Activated CD8-positive, alpha-beta T cell treated with anti-CD3 and anti-CD28 coated beads, Interleukin-2, amount 10 ng/mL, durations not matched to agents 7 days and 5 days (primary cell): ENCODE measurements at regions of chr12 and their contacts with region 1.

Region 1: DNA sequence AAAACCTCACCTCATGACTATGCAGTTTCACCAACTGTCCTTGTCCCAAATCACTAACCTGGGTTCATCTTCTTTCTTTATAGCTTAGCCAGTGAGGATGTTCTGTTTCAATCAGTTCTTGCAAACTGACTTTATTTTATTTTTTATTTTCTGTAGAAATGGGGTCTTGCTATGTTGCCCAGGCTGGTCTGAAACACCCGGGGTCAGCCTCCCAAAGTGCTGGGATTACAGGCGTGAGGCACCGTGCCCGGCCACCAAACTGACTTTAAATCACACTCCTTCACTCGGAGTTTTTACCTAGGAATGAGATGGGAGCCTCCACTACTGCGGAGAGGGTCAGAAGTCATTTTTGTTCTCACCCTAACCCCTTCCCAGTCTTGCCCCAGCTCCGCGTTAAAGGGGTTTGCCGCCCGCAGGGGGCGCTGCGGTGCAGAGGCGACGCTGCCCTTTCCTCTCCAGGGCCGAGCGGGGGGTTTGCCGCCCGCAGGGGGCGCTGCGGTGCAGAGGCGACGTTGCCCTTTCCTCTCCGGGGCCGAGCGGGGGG is 7.0 kb upstream of the B4GALNT3 start:
- DNase-seq: peak; percentile 68
- ATAC-seq: no peak
- H3K4me3 Mint-ChIP-seq: no peak overlapping the region
- H3K27ac Mint-ChIP-seq: no peak overlapping the region
- H3K4me1 Mint-ChIP-seq: peaks cover 2% of the 10 kb centered on the region
- H3K27me3 Mint-ChIP-seq: peaks cover 43% of the 10 kb centered on the region

Region 2: GRCh38 chr12:278046-278445 is 174.7 kb before region 1 on chr12:
- CTCF ChIA-PET with region 1: no interaction called
- POLR2A ChIA-PET with region 1: no interaction called
- DNase-seq: no peak
- ATAC-seq: no peak
- H3K4me3 Mint-ChIP-seq: no peak overlapping the region
- H3K27ac Mint-ChIP-seq: no peak overlapping the region
- H3K4me1 Mint-ChIP-seq: no peaks in the 10 kb centered on the region
- H3K27me3 Mint-ChIP-seq: no peaks in the 10 kb centered on the region

Region 3: DNA sequence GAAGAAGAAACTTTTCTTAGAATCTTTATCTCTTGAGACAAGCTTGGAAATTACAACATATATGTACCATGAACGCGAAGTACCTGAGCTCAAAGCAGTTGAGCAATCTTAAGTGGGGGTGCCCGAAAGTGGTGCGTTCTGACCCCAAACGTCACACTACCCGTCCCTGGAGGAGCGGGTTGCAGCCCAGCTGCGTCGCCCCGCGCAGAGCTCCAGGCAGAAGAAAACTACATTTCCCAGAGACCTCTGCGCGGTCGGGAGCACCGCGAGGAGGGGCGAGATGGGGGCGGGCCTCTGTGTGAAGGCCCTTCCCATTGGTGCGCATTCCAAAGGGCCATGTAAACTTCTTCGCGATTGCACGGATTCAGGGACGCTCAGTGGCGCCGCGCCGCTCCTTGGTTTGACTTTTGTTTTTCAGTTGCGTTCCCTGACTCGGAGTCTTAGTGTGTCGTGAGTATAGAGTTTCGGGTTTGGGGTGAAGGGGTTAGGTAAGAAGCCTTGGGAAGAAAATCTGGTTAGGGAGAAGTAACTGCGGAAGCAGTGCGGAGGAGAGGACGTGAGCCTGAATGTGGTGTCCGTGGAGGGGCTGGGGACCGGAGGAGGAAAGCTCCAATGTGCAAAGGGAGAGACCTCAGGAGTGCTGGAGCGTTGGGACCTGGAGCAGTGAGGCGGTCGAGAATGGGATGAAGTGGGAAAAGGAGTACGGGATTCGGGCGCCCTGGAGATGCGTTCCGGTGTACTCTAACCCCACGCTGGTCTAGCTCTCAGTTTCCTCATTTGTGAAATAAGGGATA is 51.3 kb before region 1 on chr12 and contains the start of gene CCDC77:
- CTCF ChIA-PET with region 1: interaction called, 11 read pairs
- POLR2A ChIA-PET with region 1: no interaction called
- DNase-seq: peak; percentile 96
- ATAC-seq: peak; percentile 100
- H3K4me3 Mint-ChIP-seq: no peak within 1 kb of the TSS
- H3K27ac Mint-ChIP-seq: no peak within 1 kb of the TSS
- H3K4me1 Mint-ChIP-seq: no peaks in the 10 kb centered on the region
- H3K27me3 Mint-ChIP-seq: no peaks in the 10 kb centered on the region
- total RNA-seq, gene CCDC77: 16.8 to 18.9 TPM

Region 4: DNA sequence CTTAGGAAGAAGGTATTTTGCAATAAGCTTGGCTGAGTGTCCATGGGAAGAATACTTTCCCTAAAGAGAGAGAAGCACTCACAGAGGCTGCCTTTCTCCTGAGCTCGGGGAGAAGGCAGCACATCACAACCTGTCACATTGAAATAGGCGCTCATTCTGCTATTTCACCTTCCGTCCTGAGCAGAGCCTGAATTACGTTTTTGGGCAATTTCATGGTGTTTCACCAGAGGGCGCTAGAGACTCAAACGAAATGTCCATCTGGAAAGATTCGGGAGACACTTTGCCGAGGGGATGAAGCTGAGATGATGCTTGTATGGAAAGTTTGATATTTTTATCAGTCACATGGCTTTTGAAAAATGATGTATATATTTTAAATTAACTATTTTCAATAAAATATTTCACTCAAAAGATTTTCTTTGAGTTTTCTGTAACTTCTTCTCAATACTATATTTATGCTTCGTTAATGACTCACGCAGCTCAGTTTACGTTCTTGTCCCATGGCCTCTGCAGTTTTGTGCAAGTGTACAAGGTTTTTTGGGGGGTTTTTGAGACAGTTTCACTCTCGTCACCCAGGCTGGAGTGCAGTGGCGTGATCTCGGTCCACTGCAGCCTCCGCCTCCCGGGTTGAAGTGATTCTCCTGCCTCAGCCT is 10.4 kb before region 1 on chr12:
- CTCF ChIA-PET with region 1: interaction called, 22 read pairs
- POLR2A ChIA-PET with region 1: no interaction called
- DNase-seq: peak; percentile 55
- ATAC-seq: peak; percentile 36
- H3K4me3 Mint-ChIP-seq: no peak overlapping the region
- H3K27ac Mint-ChIP-seq: no peak overlapping the region
- H3K4me1 Mint-ChIP-seq: no peaks in the 10 kb centered on the region
- H3K27me3 Mint-ChIP-seq: no peaks in the 10 kb centered on the region

Region 5: GRCh38 chr12:538731-539539 is 86.2 kb after region 1 on chr12:
- CTCF ChIA-PET with region 1: interaction called, 58 read pairs
- POLR2A ChIA-PET with region 1: no interaction called
- DNase-seq: peak; percentile 71
- ATAC-seq: peak; percentile 97
- H3K4me3 Mint-ChIP-seq: peak overlapping the region; percentile 29
- H3K27ac Mint-ChIP-seq: peak overlapping the region; percentile 91
- H3K4me1 Mint-ChIP-seq: peaks cover 20% of the 10 kb centered on the region
- H3K27me3 Mint-ChIP-seq: no peaks in the 10 kb centered on the region

Region 6: GRCh38 chr12:546921-547845 is 94.4 kb after region 1 on chr12:
- CTCF ChIA-PET with region 1: interaction called, 81 read pairs
- POLR2A ChIA-PET with region 1: no interaction called
- DNase-seq: peak; percentile 76
- ATAC-seq: peak; percentile 82
- H3K4me3 Mint-ChIP-seq: no peak overlapping the region
- H3K27ac Mint-ChIP-seq: no peak overlapping the region
- H3K4me1 Mint-ChIP-seq: peaks cover 50% of the 10 kb centered on the region
- H3K27me3 Mint-ChIP-seq: peaks cover 22% of the 10 kb centered on the region

Region 7: DNA sequence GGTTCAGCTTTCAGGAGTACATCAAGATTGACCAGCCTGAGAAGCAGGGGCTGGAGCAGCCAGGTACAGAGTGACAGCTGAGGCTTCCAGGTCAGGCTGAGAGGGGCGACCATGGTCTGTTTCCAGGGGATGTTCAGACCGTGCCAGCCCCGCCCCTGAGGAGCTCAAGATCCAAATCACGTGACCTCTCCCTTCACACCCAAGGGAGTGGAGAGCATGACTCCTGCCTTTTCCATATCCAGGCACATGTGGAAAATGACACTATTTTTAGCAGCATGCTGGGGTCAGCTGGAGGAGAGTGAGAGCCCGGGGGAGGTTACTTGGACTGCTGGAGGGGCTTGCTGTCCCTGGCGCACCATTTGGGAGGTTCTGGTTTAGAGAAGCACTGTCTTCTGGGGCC is 99.7 kb after region 1 on chr12:
- CTCF ChIA-PET with region 1: interaction called, 81 read pairs
- POLR2A ChIA-PET with region 1: interaction called, 3 read pairs
- DNase-seq: no peak
- ATAC-seq: no peak
- H3K4me3 Mint-ChIP-seq: peak overlapping the region; percentile 90
- H3K27ac Mint-ChIP-seq: peak overlapping the region; percentile 90
- H3K4me1 Mint-ChIP-seq: peaks cover 66% of the 10 kb centered on the region
- H3K27me3 Mint-ChIP-seq: peaks cover 6% of the 10 kb centered on the region